Caco-2 (cell line): ENCODE measurements at regions of chr6 and their contacts with region 1.

Region 1: GRCh38 chr6:168451805-168452517 is 11.0 kb downstream of the SMOC2 start:
- DNase-seq: peak in 1 of 2 experiments; percentile 40
- H3K4me3 ChIP-seq: no peak overlapping the region
- H3K4me3 Mint-ChIP-seq: no peak overlapping the region
- H3K27ac Mint-ChIP-seq: no peak overlapping the region
- H3K4me1 ChIP-seq: 0 out of 2 replicates have a peak, but pooled peaks cover 4% of the 10 kb centered on the region
- H3K4me1 Mint-ChIP-seq: peaks cover 11% of the 10 kb centered on the region
- H3K27me3 ChIP-seq: no peaks in the 10 kb centered on the region
- H3K27me3 Mint-ChIP-seq: peaks cover 6% of the 10 kb centered on the region
- CTCF ChIP-seq: peak; percentile 48 to 58

Region 2: DNA sequence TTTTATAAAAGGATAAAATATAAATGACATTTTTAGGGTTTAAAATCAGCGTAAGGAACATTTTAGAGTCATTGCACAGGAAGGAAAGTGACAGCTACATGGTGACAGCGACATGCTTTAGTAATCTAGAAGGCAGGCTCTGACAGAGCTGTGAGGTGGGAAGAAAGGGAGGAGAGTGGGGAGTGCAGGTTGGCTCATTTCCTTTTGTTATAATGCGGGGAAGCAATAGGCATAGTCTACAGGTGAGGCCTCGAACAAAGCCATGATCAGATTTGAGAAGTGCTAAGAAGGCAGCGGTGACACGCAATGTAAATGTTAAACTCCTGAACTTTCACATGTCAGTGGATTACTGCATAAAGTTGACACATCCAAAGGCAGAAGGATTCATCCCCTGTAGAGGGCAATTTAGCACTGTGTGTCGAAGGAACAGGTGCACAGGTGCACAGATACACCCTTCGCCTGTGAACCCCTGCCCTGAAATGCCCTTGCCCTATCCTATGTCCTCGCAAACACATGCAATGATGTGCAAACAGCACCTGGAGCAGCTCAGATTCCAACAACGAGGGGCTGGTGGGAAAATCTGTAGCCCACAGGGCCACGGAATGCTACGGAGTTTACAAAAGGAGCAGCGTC is 43.3 kb before region 1 on chr6:
- CTCF ChIA-PET with region 1: interaction called, 10 read pairs
- POLR2A ChIA-PET with region 1: no interaction called
- intact Hi-C with region 1: no loop called
- DNase-seq: peak in 1 of 2 experiments; percentile 9
- H3K4me3 ChIP-seq: no peak overlapping the region
- H3K4me3 Mint-ChIP-seq: no peak overlapping the region
- H3K27ac Mint-ChIP-seq: no peak overlapping the region
- H3K4me1 ChIP-seq: no peaks in the 10 kb centered on the region
- H3K4me1 Mint-ChIP-seq: no peaks in the 10 kb centered on the region
- H3K27me3 ChIP-seq: no peaks in the 10 kb centered on the region
- H3K27me3 Mint-ChIP-seq: no peaks in the 10 kb centered on the region
- CTCF ChIP-seq: no peak

Region 3: GRCh38 chr6:168428052-168428826 is 23.7 kb before region 1 on chr6:
- CTCF ChIA-PET with region 1: no interaction called
- POLR2A ChIA-PET with region 1: no interaction called
- intact Hi-C with region 1: no loop called
- DNase-seq: no peak
- H3K4me3 ChIP-seq: no peak overlapping the region
- H3K4me3 Mint-ChIP-seq: no peak overlapping the region
- H3K27ac Mint-ChIP-seq: no peak overlapping the region
- H3K4me1 ChIP-seq: no peaks in the 10 kb centered on the region
- H3K4me1 Mint-ChIP-seq: no peaks in the 10 kb centered on the region
- H3K27me3 ChIP-seq: no peaks in the 10 kb centered on the region
- H3K27me3 Mint-ChIP-seq: peaks cover 9% of the 10 kb centered on the region
- CTCF ChIP-seq: no peak

Region 4: GRCh38 chr6:168607272-168608112 is 155.5 kb after region 1 on chr6:
- CTCF ChIA-PET with region 1: no interaction called
- POLR2A ChIA-PET with region 1: no interaction called
- intact Hi-C with region 1: loop called (anchors 10 kb)
- DNase-seq: no peak
- H3K4me3 ChIP-seq: no peak overlapping the region
- H3K4me3 Mint-ChIP-seq: no peak overlapping the region
- H3K27ac Mint-ChIP-seq: no peak overlapping the region
- H3K4me1 ChIP-seq: peaks cover 10% of the 10 kb centered on the region; the same call in 1 of the 2 replicates
- H3K4me1 Mint-ChIP-seq: peaks cover 5% of the 10 kb centered on the region
- H3K27me3 ChIP-seq: no peaks in the 10 kb centered on the region
- H3K27me3 Mint-ChIP-seq: no peaks in the 10 kb centered on the region
- CTCF ChIP-seq: no peak

Region 5: DNA sequence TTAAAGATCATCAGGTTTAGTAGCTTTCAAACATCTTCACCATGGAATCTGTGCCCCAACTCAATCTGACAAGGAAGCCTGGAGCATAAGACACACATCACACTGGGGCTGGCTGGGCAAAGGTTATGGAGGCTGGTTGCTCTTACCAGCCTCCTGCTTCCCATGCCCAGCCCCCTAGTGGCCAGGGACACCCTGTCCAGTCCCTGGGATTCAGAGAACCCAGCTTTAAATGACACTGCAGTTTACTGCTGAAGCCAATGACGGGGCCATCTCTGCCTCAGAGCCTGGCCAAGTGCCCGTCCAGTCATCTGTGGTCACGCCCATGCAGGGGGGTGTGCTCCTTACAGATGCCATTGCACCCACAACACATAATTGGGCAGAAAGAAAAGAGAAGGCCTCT is 261.9 kb after region 1 on chr6:
- CTCF ChIA-PET with region 1: no interaction called
- POLR2A ChIA-PET with region 1: no interaction called
- intact Hi-C with region 1: loop called (anchors 5 kb)
- DNase-seq: peak; percentile 62 to 69
- H3K4me3 ChIP-seq: no peak overlapping the region
- H3K4me3 Mint-ChIP-seq: no peak overlapping the region
- H3K27ac Mint-ChIP-seq: no peak overlapping the region
- H3K4me1 ChIP-seq: no peaks in the 10 kb centered on the region
- H3K4me1 Mint-ChIP-seq: no peaks in the 10 kb centered on the region
- H3K27me3 ChIP-seq: no peaks in the 10 kb centered on the region
- H3K27me3 Mint-ChIP-seq: no peaks in the 10 kb centered on the region
- CTCF ChIP-seq: peak; percentile 49 to 57

Region 6: DNA sequence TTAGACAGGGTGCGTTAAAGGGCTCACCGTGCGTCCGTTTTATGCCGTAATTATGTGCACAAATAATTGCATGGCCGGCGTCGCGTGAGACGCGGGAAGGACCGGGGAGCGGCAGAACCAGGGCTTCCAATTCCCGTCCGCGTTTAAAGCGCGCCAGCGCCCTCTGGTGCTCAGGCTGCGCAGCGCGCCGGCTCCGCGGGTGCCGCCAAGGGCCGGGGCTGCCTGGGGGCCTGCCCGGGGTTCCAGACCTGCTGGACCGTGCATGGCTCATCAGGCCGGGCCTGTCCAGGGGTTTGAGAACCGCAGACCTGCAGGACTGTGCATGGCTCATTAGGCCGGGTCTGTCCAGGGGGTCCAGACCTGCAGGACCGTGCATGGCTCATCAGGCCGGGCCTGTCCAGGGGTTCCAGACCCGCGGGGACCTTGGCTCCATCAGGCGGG is 432.7 kb after region 1 on chr6:
- CTCF ChIA-PET with region 1: interaction called, 3 read pairs
- POLR2A ChIA-PET with region 1: no interaction called
- intact Hi-C with region 1: loop called (anchors 1 kb)
- DNase-seq: peak; percentile 54 to 84
- H3K4me3 ChIP-seq: no peak overlapping the region
- H3K4me3 Mint-ChIP-seq: peak overlapping the region; percentile 27
- H3K27ac Mint-ChIP-seq: no peak overlapping the region
- H3K4me1 ChIP-seq: no peaks in the 10 kb centered on the region
- H3K4me1 Mint-ChIP-seq: peaks cover 5% of the 10 kb centered on the region
- H3K27me3 ChIP-seq: no peaks in the 10 kb centered on the region
- H3K27me3 Mint-ChIP-seq: no peaks in the 10 kb centered on the region
- CTCF ChIP-seq: peak; percentile 77 to 91